PC-9 (cell line): ENCODE measurements at regions of chr3 and their contacts with region 1.

Region 1: GRCh38 chr3:101676765-101677435 is at the start of gene ZBTB11:
- DNase-seq: peak; percentile 100
- H3K4me3 ChIP-seq: peak within 1 kb of the TSS; percentile 79
- H3K27ac ChIP-seq: peak within 1 kb of the TSS; percentile 70
- H3K4me1 ChIP-seq: peaks cover 22% of the 10 kb centered on the region
- H3K27me3 ChIP-seq: no peaks in the 10 kb centered on the region
- CTCF ChIP-seq: peak; percentile 73
- total RNA-seq, gene ZBTB11: 18.0 and 22.1 TPM in 2 replicates

Region 2: GRCh38 chr3:101512646-101513418 is 164.1 kb before region 1 on chr3 and contains the start of gene SENP7:
- CTCF ChIA-PET with region 1: no interaction called
- POLR2A ChIA-PET with region 1: no interaction called
- intact Hi-C with region 1: loop called (anchors 2 kb)
- DNase-seq: peak; percentile 79 to 84
- H3K4me3 ChIP-seq: peak within 1 kb of the TSS; percentile 73
- H3K27ac ChIP-seq: peak within 1 kb of the TSS; percentile 83
- H3K4me1 ChIP-seq: peaks cover 21% of the 10 kb centered on the region
- H3K27me3 ChIP-seq: no peaks in the 10 kb centered on the region
- CTCF ChIP-seq: no peak
- total RNA-seq, gene SENP7: 11.1 and 17.4 TPM in 2 replicates

Region 3: DNA sequence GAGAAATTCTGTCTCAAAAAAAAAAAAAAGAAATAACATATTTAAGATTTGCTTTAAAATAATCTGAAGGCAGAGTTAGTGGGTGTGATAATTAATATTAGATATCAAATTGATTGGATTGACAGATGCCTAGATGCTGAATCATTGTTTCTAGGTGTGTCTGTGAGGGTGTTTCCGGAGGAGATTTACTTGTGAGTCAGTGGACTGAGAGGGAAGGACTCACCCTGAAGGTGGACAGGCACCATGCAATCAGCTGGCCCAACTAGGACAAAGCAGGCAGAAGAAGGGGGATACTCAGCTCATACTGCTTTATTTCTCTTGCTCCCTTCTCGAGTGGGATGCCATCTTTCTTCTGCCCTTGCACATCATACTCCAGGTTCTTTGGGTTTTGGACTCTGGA is 26.3 kb after region 1 on chr3:
- CTCF ChIA-PET with region 1: interaction called, 13 read pairs
- POLR2A ChIA-PET with region 1: no interaction called
- intact Hi-C with region 1: no loop called
- DNase-seq: peak; percentile 67 to 86
- H3K4me3 ChIP-seq: no peak overlapping the region
- H3K27ac ChIP-seq: peak overlapping the region; percentile 57
- H3K4me1 ChIP-seq: peaks cover 22% of the 10 kb centered on the region
- H3K27me3 ChIP-seq: no peaks in the 10 kb centered on the region
- CTCF ChIP-seq: no peak

Region 4: DNA sequence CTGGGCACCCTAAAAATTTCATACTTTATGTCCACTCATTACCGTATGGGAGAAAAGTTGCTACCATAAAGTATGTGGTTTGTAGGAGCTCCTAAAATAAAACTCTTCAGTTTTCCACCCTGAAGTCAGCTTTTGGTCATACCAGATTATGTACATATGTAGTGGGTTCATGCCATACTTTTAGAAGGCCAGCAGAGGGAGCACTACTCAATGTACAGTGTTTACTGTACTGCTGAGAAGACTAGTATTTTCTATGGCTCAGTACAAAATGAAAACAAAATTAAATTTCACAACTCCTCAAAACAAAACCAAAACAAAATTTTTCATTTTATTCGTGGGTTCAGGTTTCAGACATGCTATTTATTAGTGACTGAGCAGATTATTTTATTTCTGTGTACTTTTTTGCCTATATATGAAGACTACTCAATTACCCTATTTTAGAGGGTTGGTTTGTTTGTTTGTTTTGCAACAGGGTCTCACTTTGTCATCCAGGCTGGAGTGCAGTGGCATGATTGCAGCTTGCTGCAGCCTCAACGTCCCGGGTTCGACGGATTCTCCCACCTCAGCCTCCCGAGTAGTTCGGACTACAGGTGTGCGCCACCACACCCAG is 126.4 kb after region 1 on chr3:
- CTCF ChIA-PET with region 1: interaction called, 12 read pairs
- POLR2A ChIA-PET with region 1: no interaction called
- intact Hi-C with region 1: no loop called
- DNase-seq: peak; percentile 24 to 68
- H3K4me3 ChIP-seq: no peak overlapping the region
- H3K27ac ChIP-seq: no peak overlapping the region
- H3K4me1 ChIP-seq: no peaks in the 10 kb centered on the region
- H3K27me3 ChIP-seq: no peaks in the 10 kb centered on the region
- CTCF ChIP-seq: peak; percentile 99

Region 5: GRCh38 chr3:102057781-102058421 is 381.0 kb after region 1 on chr3:
- CTCF ChIA-PET with region 1: interaction called, 11 read pairs
- POLR2A ChIA-PET with region 1: no interaction called
- intact Hi-C with region 1: no loop called
- DNase-seq: no peak
- H3K4me3 ChIP-seq: no peak overlapping the region
- H3K27ac ChIP-seq: no peak overlapping the region
- H3K4me1 ChIP-seq: peaks cover 8% of the 10 kb centered on the region
- H3K27me3 ChIP-seq: no peaks in the 10 kb centered on the region
- CTCF ChIP-seq: no peak